WTC11 (cell line): ENCODE measurements at regions of chr22 and their contacts with region 1.

Region 1: GRCh38 chr22:17559188-17559587 is 4.1 kb upstream of the SLC25A18 start:
- DNase-seq: no peak
- ATAC-seq: no peak
- H3K4me3 Mint-ChIP-seq: no peak overlapping the region
- H3K27ac Mint-ChIP-seq: no peak overlapping the region; the same call in 1 of the 2 replicates
- H3K4me1 Mint-ChIP-seq: peaks cover 20% of the 10 kb centered on the region
- H3K27me3 Mint-ChIP-seq: no peaks in the 10 kb centered on the region
- CTCF ChIP-seq: no peak

Region 2: DNA sequence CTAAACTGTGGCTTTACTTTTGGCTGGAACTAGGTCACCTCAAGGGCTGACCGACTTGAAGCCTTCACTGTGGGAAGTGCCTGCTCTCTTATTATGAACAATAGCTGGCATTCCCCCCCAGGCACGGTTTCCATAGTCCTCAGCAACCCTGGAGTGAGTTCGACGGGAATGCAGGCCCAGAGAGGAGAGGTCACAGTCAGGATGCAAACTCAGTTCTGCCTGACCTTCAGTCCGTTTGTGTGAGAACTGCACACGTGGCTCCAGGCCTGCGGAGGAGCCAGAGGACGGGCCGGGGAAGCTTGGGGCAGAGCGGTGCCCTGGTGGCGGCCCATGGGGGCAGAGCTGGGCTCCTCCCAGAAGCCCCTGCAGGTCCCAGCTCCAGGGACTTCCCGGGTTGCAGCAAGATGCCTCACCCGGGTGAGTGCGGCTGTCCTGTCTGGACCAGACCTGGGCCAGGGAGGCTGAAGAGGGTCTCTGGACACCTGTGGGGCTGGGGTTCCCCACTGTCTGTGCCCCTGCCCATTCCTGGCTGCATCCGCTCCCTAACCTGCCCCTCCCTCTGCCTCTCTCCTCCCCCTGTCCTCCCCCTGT is 21.3 kb after region 1 on chr22:
- CTCF ChIA-PET with region 1: interaction called, 10 read pairs
- POLR2A ChIA-PET with region 1: no interaction called
- DNase-seq: peak; percentile 51
- ATAC-seq: peak; percentile 87
- H3K4me3 Mint-ChIP-seq: no peak overlapping the region
- H3K27ac Mint-ChIP-seq: 0 out of 2 replicates have a peak overlapping the region, but pooled peaks have one; percentile 29
- H3K4me1 Mint-ChIP-seq: 0 out of 2 replicates have a peak, but pooled peaks cover 7% of the 10 kb centered on the region
- H3K27me3 Mint-ChIP-seq: no peaks in the 10 kb centered on the region
- CTCF ChIP-seq: no peak